Heart left ventricle (tissue), 16 donors: ENCODE measurements at regions of chr11 and their contacts with region 1.

Region 1: GRCh38 chr11:111846636-111847035 is 24.7 kb downstream of the ALG9 start:
- DNase-seq: no peak
- ATAC-seq: peak in 2 of 4 donors; percentile 52 to 72
- H3K4me3 ChIP-seq: no peak overlapping the region
- H3K27ac ChIP-seq: peak overlapping the region in 3 of 12 donors; percentile 1 to 2 (median 1)
- H3K4me1 ChIP-seq: peaks cover 0 to 22% (median 0%) of the 10 kb centered on the region in 12 donors
- H3K27me3 ChIP-seq: no peaks in the 10 kb centered on the region
- CTCF ChIP-seq: no peak
- POLR2A ChIP-seq: no peak

Region 2: GRCh38 chr11:111586388-111586831 is 260.2 kb before region 1 on chr11:
- intact Hi-C with region 1: loop called in 8 of 10 experiments (anchors 1 to 5 kb)
- DNase-seq: no peak
- ATAC-seq: peak in 3 of 4 donors; percentile 42 to 62 (median 49)
- H3K4me3 ChIP-seq: no peak overlapping the region
- H3K27ac ChIP-seq: no peak overlapping the region
- H3K4me1 ChIP-seq: peaks cover 0 to 5% (median 0%) of the 10 kb centered on the region in 12 donors
- H3K27me3 ChIP-seq: no peaks in the 10 kb centered on the region
- CTCF ChIP-seq: peak; percentile 27 to 71 (median 56)
- POLR2A ChIP-seq: no peak

Region 3: DNA sequence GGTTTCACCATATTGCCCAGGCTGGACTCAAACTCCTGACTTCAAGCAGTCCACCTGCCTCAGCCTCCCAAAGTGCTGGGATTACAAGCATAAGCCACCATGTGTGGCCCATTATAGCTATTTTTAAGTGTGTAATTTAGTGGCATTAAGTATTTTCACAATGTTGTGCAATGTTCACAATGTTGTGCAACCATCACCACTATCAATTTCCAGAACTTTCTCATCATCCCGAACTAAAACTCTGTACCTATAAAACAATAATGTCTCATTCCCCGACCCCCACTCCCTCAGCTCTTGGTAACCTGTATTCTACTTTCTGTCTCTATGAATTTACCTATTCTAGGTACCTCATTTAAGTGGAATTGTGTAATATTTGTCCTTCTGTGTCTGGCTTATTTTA is 40.2 kb after region 1 on chr11:
- intact Hi-C with region 1: no loop called
- DNase-seq: no peak
- ATAC-seq: no peak
- H3K4me3 ChIP-seq: no peak overlapping the region
- H3K27ac ChIP-seq: no peak overlapping the region
- H3K4me1 ChIP-seq: no peaks in the 10 kb centered on the region
- H3K27me3 ChIP-seq: no peaks in the 10 kb centered on the region
- CTCF ChIP-seq: no peak
- POLR2A ChIP-seq: no peak